Posterior vena cava (tissue), 2 donors: ENCODE measurements at regions of chr10 and their contacts with region 1.

Region 1: DNA sequence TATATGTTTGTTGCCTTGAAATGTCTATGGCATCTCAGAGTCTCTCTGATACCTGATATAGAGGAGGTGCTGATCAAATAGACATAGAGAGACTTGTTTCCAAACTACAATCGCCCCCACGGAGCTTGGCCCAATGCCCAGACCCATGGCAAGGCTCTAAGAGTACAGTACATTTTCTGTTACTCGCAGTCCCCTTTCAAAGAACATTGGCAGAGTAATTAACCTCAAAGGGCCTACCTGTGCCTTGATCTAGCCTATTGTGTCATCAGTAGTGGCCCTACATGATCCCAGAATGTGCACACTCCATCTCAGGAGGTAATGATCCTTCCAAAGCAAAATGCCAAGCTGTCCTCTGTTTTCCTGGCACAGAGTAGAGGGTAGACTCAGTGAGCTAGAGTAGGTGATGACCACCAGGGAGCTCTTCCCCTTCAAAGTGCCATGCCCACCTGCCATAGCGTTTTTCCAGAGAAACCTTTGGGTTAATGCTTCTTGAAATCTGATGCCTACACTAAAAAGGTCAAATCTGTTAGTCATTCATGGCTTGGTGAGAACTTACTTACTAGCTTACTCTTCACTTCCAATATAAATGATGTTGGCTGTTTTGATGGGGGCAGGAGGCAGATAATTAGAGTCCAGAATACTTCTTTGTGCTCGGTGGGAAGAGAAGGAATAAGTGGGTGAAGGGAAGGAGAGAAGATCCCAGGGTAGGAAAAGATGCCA is 41.2 kb upstream of the ACSL5 start:
- DNase-seq: no peak

Region 2: DNA sequence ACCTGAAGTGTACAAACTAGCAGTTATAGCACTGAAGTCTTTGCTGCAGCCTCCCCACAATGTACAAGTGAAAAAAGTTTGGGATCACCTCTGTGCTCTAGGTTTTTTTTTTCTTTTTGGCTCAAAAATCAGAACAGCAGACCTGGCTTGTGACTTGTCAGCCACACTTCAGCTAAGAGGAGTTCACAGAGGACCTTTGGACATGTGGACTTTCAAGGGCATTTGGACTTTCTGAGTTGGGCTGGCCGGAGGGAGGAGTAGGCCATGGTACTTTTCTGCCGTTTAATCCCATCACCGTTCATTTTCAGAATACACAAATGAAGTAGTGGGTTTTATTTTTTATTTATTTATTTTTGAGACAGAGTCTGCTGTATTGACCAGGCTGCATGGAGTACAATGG is 19.4 kb after region 1 on chr10:
- intact Hi-C with region 1: loop called in 1 of 2 experiments (anchors 1 kb)
- DNase-seq: no peak

Region 3: GRCh38 chr10:113635922-113636321 is 1303.3 kb after region 1 on chr10:
- intact Hi-C with region 1: loop called in 1 of 2 experiments (anchors 5 kb)
- DNase-seq: no peak